Adrenal gland (tissue), 19 donors: ENCODE measurements at regions of chr17 and their contacts with region 1.

Region 1: DNA sequence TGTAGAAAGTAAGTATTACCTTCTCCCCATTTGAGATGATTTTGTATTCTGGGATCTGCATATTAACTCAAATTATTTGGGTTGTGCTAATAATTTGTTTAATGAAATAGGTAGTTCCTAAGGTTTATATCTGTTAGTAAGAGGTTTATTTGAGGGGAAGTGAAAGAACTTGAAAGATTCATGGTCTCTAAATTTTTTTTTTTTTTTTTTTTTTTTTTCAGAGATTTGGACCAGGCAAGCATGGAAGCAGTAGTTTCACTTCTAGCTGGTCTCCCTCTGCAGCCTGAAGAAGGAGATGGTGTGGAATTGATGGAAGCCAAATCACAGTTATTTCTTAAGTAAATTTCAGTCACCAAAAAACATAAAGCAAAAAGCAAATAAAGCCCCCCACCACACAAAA is 65.2 kb downstream of the OMG start:
- DNase-seq: no peak
- H3K4me3 ChIP-seq: no peak overlapping the region
- H3K27ac ChIP-seq: no peak overlapping the region
- H3K4me1 ChIP-seq: no peaks in the 10 kb centered on the region
- H3K27me3 ChIP-seq: no peaks in the 10 kb centered on the region
- CTCF ChIP-seq: no peak
- POLR2A ChIP-seq: no peak

Region 2: DNA sequence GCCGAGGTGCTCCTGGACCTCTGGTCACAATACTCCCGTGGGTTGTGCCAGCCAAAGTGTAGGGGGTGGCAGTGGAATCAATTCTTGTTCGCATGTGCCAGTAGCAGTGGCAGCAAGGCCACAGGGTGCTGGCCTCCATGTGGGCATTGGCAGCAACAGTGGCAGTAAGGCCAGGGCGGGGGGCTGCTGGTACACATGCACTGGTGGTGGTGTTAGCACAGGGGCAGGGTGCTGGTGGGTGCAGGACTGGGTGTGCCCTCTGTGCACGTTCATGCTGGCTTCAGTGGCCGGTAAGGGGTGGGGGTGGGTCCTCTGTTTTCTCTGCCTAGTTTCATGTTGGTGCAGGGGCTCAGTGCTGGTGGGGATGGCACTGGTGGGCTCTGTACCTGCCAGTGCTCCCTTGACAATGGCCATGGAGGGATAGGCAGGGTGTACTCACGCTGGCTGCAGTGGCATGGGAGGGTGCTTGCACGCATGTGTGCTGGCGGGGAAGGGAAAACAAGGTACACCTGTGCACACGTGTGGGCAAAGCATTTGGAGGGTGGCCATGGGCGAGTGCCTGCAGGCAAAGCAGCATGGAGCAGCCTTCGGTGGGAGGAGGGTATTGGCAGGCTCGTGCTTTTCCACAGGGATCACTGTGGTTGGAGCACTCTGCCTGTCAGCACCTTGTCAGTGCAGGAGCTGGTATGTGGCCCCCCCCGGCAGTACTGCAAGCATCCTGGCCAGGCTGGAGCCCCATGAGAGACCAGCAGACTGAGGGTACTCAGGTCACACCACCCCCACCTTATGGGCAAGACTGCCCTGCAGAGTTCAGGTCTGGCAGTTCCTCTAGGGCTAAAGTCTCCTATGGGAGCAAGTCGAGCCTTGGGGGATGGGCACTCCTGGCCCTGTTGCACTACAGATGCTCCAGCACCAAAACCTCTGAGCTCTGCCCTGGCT is 101.3 kb before region 1 on chr17:
- intact Hi-C with region 1: no loop called
- DNase-seq: no peak
- H3K4me3 ChIP-seq: no peak overlapping the region
- H3K27ac ChIP-seq: no peak overlapping the region
- H3K4me1 ChIP-seq: peaks cover 0 to 7% of the 10 kb centered on the region in 2 donors
- H3K27me3 ChIP-seq: no peaks in the 10 kb centered on the region
- CTCF ChIP-seq: no peak
- POLR2A ChIP-seq: no peak

Region 3: DNA sequence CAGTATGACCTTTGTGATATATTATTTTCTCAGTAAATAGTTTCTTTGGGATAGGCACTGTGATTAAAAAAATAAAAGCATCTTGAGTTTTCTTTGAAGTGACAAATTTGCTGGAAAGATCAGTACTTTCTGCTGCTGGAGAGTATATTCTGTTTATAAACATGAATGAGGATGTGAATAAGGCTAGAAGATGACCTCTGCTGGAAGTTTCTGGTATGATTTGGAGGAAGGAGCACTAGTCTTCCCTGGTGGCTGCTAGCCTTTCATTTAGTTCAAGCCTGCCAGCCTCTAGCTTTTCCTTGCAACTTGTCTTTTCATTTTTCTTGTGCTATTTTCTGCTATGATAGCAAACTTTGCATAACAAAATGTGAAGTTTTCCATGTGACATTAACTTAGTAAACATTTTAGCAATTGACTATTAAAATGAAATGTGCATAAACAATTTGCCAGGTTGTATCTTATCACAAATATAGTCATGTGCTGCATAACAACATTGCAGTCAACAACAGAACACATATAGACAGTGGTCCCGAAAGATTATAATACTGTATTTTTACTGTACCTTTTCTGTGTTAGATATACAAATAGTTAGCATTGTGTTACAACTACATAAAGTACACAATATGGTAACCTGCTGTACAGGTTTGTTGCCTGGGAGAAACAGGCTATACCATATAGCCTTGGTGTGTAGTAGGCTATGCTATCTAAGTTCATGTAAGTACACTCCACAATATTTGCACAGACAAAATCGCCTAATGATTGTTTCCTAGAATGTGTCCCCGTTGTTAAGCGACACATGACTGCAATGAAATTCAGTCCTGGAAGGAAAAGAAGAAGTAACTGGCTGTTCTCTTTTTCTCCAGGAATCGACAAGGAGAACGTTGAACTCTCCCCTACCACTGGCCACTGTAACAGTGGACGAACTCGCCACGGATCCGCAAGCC is 141.6 kb after region 1 on chr17:
- intact Hi-C with region 1: loop called in 1 of 2 experiments (anchors 10 kb)
- DNase-seq: peak in 2 of 7 donors; percentile 14 to 32
- H3K4me3 ChIP-seq: no peak overlapping the region
- H3K27ac ChIP-seq: peak overlapping the region in 1 of 5 donors; percentile 53
- H3K4me1 ChIP-seq: peaks cover 0 to 31% of the 10 kb centered on the region in 2 donors
- H3K27me3 ChIP-seq: no peaks in the 10 kb centered on the region
- CTCF ChIP-seq: peak; percentile 39 to 70 (median 60)
- POLR2A ChIP-seq: no peak